Breast epithelium (tissue), 4 donors: ENCODE measurements at regions of chr12 and their contacts with region 1.

Region 1: GRCh38 chr12:127923501-127923900 is 343.5 kb upstream of the TMEM132C start:
- DNase-seq: no peak
- H3K4me3 ChIP-seq: no peak overlapping the region
- H3K27ac ChIP-seq: no peak overlapping the region
- H3K4me1 ChIP-seq: no peaks in the 10 kb centered on the region
- H3K27me3 ChIP-seq: no peaks in the 10 kb centered on the region
- CTCF ChIP-seq: no peak
- POLR2A ChIP-seq: no peak

Region 2: GRCh38 chr12:127677537-127678131 is 245.9 kb before region 1 on chr12:
- intact Hi-C with region 1: no loop called
- DNase-seq: peak in 1 of 2 donors; percentile 27
- H3K4me3 ChIP-seq: no peak overlapping the region
- H3K27ac ChIP-seq: no peak overlapping the region
- H3K4me1 ChIP-seq: no peaks in the 10 kb centered on the region
- H3K27me3 ChIP-seq: no peaks in the 10 kb centered on the region
- CTCF ChIP-seq: peak; percentile 47 to 55 (median 48)
- POLR2A ChIP-seq: no peak

Region 3: DNA sequence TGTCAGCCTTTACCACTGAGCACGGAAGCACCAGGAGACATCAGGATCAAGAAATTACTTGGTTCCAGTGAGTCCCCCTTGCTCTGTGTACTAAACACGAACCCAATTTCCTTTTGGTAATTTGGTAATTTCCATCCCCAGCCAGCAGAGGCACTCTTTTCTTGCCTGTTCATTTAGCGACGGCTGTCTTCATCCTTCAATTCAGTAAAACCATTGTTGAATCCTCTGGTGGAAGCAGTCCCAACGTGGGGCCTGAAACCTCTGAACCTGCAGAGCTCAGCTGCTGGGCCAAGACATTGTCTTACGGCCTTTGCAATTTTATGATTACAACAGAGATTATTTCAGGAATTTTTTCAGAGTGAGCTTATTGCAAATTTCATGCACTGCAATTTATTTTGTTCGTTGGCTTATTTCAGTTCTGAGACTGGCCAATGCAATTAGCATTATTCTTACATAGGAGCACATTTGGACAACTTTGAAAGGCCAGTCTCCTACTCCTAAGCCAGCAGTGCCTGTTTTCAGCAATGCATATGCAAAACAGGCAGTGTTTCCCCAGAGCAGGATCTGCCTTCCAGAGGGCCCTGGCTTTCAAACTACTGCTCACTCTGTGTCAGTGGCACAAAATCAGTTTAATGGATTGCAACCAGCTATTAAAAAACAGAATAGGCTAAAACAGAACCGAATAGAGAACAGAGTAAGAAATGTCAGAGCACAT is 29.4 kb before region 1 on chr12:
- intact Hi-C with region 1: no loop called
- DNase-seq: no peak
- H3K4me3 ChIP-seq: no peak overlapping the region
- H3K27ac ChIP-seq: no peak overlapping the region
- H3K4me1 ChIP-seq: no peaks in the 10 kb centered on the region
- H3K27me3 ChIP-seq: no peaks in the 10 kb centered on the region
- CTCF ChIP-seq: no peak
- POLR2A ChIP-seq: no peak

Region 4: DNA sequence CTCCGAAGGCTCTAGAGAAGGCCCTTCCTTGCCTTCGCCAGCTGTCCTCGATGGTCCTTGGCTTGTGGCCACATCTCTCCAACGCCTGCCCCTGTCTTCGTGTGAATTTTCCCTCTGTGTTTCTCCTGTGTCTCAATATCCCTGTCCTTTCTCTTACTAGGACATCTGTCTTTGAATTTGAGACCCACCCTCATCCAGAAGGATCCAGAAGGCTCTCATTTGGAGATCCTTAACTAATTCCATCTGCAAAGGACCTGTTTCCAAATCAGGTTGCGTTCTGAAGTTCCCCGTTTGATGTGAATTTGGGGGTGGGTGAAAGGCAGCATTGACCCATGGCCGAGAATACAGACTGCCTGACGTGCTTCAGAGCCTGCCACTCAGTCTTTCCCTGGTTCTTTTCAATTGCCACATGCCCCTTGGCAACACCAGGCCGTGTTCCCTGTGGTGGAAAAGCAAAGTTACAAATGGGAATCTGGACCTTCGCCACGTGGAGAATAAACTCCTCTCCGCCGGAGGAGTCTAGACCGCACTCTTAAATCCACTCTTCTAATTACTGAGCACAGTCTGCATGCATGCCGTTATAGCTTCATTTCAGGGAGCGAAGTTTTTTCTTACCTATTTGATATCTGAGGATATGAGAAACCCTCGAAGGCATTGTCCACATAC is 502.3 kb after region 1 on chr12:
- intact Hi-C with region 1: loop called (anchors 5 kb)
- DNase-seq: no peak
- H3K4me3 ChIP-seq: no peak overlapping the region
- H3K27ac ChIP-seq: no peak overlapping the region
- H3K4me1 ChIP-seq: no peaks in the 10 kb centered on the region
- H3K27me3 ChIP-seq: no peaks in the 10 kb centered on the region
- CTCF ChIP-seq: no peak
- POLR2A ChIP-seq: no peak